ENCODE measurements at regions of chr10 and their contacts with region 1.

Region 1: GRCh38 chr10:79068562-79069324 is at the start of gene ZMIZ1:
- DNase-seq: peak; percentile 98
- H3K4me3 ChIP-seq: peak within 1 kb of the TSS; percentile 88 to 99 (median 94)
- H3K27ac ChIP-seq: peak within 1 kb of the TSS; percentile 97 to 100 (median 99)
- H3K4me1 ChIP-seq: peaks cover 37 to 54% (median 51%) of the 10 kb centered on the region in 4 donors
- H3K27me3 ChIP-seq: peaks cover 0 to 7% (median 0%) of the 10 kb centered on the region in 4 donors
- CTCF ChIP-seq: peak; percentile 20 to 44 (median 36)
- EP300 ChIP-seq: no peak
- POLR2A ChIP-seq: peak; percentile 66
- total RNA-seq, gene ZMIZ1: 48.7 to 87.2 (median 66.0) TPM

Region 2: DNA sequence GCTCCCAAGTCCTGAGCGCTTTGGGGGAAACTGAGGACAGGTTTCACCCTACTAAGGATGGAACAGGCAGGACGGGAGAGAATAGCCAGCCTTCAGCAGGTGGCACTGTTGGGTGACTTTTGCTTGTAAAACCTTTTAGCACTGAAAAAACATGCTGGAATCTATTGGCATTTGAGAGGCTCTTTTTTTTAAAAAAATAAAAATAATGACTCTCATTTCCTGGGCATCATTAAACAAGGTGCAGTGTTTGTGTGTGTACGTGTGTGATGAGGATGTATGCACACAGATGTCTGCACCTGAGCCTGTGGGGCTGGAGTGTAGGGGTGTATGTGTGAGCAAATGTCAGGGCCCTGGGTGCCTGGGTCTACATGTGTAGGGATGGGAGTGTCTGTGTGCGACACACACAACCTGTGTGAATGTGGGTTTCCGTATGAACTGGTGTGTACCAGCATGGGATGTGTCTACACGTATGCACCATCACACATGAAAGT is 857.1 kb before region 1 on chr10:
- intact Hi-C with region 1: loop called (anchors 5 kb)
- DNase-seq: no peak
- H3K4me3 ChIP-seq: no peak overlapping the region
- H3K27ac ChIP-seq: peak overlapping the region; percentile 45 to 64 (median 60)
- H3K4me1 ChIP-seq: peaks cover 31 to 41% (median 38%) of the 10 kb centered on the region in 4 donors
- H3K27me3 ChIP-seq: no peaks in the 10 kb centered on the region
- CTCF ChIP-seq: peak; percentile 50 to 71 (median 64)
- EP300 ChIP-seq: no peak
- POLR2A ChIP-seq: no peak

Region 3: DNA sequence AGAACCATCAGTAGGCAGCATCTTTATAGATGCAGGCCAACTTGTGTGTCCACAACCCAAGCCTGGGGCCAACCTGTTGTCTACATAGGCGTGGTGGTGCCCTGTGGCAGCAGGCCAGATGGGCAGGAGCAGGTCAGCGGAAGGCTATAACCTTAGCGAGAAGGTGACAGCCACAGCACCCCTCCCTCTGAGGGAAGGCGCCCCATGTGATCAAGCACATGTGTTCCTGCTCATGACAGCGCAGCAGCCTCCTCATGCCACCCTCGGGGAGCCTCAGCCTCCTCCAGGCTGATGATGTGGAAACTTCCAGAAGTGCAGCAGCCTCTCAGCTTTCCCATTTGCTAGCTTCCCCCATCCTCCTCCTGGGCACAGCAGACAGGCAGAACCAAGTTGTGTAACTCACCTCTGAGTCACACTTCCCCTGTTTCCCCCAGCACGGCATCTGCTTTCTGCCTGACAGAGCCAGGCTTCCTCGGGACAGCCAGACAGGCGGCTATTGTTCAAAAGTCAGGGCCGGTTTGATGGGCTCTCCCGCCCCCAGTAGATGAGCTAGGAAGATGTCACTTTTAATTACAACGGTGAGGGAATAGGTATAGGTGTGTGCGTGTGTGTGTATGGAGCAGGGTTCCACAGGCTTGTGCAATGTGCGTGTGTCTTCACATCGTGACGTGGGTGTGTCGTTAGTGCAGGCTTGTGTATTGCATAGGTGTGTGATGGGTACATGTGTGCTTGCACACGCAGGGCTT is 312.0 kb before region 1 on chr10:
- intact Hi-C with region 1: loop called (anchors 10 kb)
- DNase-seq: peak; percentile 95
- H3K4me3 ChIP-seq: no peak overlapping the region
- H3K27ac ChIP-seq: peak overlapping the region; percentile 34 to 73 (median 60)
- H3K4me1 ChIP-seq: peaks cover 20 to 32% (median 24%) of the 10 kb centered on the region in 4 donors
- H3K27me3 ChIP-seq: no peaks in the 10 kb centered on the region
- CTCF ChIP-seq: no peak
- EP300 ChIP-seq: no peak
- POLR2A ChIP-seq: no peak

Region 4: GRCh38 chr10:79001082-79001885 is 67.5 kb before region 1 on chr10:
- intact Hi-C with region 1: no loop called
- DNase-seq: no peak
- H3K4me3 ChIP-seq: no peak overlapping the region
- H3K27ac ChIP-seq: no peak overlapping the region
- H3K4me1 ChIP-seq: peaks cover 0 to 4% (median 0%) of the 10 kb centered on the region in 4 donors
- H3K27me3 ChIP-seq: no peaks in the 10 kb centered on the region
- CTCF ChIP-seq: no peak
- EP300 ChIP-seq: no peak
- POLR2A ChIP-seq: no peak

Region 5: GRCh38 chr10:79149662-79150443 is 81.1 kb after region 1 on chr10:
- intact Hi-C with region 1: loop called (anchors 5 kb)
- DNase-seq: peak; percentile 93
- H3K4me3 ChIP-seq: no peak overlapping the region
- H3K27ac ChIP-seq: peak overlapping the region; percentile 85 to 90 (median 88)
- H3K4me1 ChIP-seq: peaks cover 99 to 100% (median 100%) of the 10 kb centered on the region in 4 donors
- H3K27me3 ChIP-seq: no peaks in the 10 kb centered on the region
- CTCF ChIP-seq: no peak
- EP300 ChIP-seq: no peak
- POLR2A ChIP-seq: no peak

Measured in esophagus muscularis mucosa (tissue), 4 donors.